Psoas muscle (tissue), 8 donors: ENCODE measurements at regions of chr18 and their contacts with region 1.

Region 1: DNA sequence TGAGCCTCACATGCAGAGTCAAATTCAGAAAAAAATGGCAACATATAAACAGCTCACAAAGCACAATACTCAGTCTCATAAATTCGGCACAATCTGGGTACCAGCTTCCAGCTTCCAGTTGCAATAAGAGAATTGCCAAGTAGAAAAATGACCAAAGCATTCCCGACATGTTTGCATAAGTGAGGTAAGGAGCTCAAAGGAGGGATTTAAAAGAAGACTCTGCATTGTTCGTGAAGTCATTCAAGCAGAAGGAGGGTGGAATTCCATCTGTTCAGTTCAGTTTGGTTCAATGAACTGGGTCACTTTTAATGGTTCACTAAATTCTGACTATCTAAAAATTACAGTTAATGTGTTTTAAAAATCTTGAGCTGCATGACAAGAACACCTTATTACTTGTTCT is 106.7 kb upstream of the KLHL14 start:
- DNase-seq: no peak
- ATAC-seq: no peak
- H3K4me3 ChIP-seq: no peak overlapping the region
- H3K27ac ChIP-seq: no peak overlapping the region
- H3K4me1 ChIP-seq: no peaks in the 10 kb centered on the region
- H3K27me3 ChIP-seq: no peaks in the 10 kb centered on the region
- CTCF ChIP-seq: no peak

Region 2: GRCh38 chr18:32595832-32596231 is 283.7 kb before region 1 on chr18:
- intact Hi-C with region 1: no loop called
- DNase-seq: no peak
- ATAC-seq: no peak
- H3K4me3 ChIP-seq: no peak overlapping the region
- H3K27ac ChIP-seq: no peak overlapping the region
- H3K4me1 ChIP-seq: no peaks in the 10 kb centered on the region
- H3K27me3 ChIP-seq: peaks cover 0 to 2% (median 2%) of the 10 kb centered on the region in 3 donors
- CTCF ChIP-seq: no peak

Region 3: DNA sequence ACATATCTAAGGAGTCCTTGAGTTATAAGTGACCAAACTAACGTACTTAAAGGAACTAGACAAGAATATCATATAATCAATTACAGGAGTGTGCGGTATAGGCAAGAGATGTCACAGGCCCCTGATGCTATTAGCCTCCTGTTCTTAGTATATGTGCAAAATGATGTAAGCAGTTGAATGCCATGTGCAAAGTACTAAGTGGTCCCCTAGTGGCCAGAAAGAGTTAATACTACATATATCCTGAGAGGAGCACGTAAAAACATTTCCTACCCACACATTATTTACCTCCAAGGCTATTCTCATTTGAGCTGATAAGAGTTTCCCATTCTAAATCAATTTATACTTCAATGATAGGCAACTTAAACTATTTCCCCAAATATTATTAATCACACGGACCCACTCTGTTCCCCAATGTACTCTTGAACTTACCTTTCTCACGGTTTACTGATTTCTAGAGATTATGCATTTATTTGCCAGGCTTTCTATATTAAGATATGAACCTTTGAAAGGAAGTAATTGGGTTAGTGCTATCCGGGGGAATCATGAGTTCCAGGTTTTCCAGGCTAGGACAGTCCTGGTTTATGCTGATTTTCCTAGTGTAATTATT is 51.3 kb after region 1 on chr18:
- intact Hi-C with region 1: loop called in 1 of 2 experiments (anchors 10 kb)
- DNase-seq: no peak
- ATAC-seq: no peak
- H3K4me3 ChIP-seq: no peak overlapping the region
- H3K27ac ChIP-seq: no peak overlapping the region
- H3K4me1 ChIP-seq: no peaks in the 10 kb centered on the region
- H3K27me3 ChIP-seq: no peaks in the 10 kb centered on the region
- CTCF ChIP-seq: peak; percentile 28